Endothelial cell of umbilical vein (primary cell): ENCODE measurements at regions of chr9 and their contacts with region 1.

Region 1: GRCh38 chr9:109910671-109911518 is 130.9 kb downstream of the PALM2AKAP2 start:
- DNase-seq: peak; percentile 88
- H3K4me3 ChIP-seq: peak overlapping the region in 1 of 3 experiments; percentile 7
- H3K27ac ChIP-seq: peak overlapping the region; percentile 100
- H3K4me1 ChIP-seq: peaks cover 73% of the 10 kb centered on the region
- H3K27me3 ChIP-seq: no peaks in the 10 kb centered on the region
- CTCF ChIP-seq: no peak
- POLR2A ChIP-seq: no peak

Region 2: GRCh38 chr9:109627041-109627440 is 283.9 kb before region 1 on chr9:
- CTCF ChIA-PET with region 1: no interaction called
- POLR2A ChIA-PET with region 1: no interaction called
- dilution Hi-C with region 1: no loop called
- intact Hi-C with region 1: no loop called
- DNase-seq: no peak
- H3K4me3 ChIP-seq: no peak overlapping the region
- H3K27ac ChIP-seq: no peak overlapping the region
- H3K4me1 ChIP-seq: no peaks in the 10 kb centered on the region
- H3K27me3 ChIP-seq: no peaks in the 10 kb centered on the region
- CTCF ChIP-seq: no peak
- POLR2A ChIP-seq: no peak

Region 3: DNA sequence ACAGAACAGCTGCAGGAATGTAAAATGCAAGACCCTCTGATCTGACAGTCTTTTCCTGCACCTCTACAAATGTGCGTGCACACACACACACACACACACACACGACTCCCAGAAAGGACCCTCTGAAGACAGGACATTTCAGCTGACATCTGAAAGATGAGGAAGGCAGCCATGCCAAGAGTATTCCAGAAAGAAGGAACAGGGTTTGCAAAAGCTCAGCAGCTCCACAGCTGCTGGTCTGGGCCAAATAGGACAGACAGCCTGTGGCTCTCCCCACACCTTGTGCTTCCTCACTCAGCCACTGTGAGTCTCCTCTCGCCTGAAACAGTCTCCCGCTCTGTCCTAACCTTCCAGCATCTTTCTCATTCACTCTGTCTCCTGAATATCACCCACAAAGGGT is 58.1 kb after region 1 on chr9:
- CTCF ChIA-PET with region 1: interaction called, 8 read pairs
- POLR2A ChIA-PET with region 1: no interaction called
- dilution Hi-C with region 1: no loop called
- intact Hi-C with region 1: loop called (anchors 1 kb)
- DNase-seq: peak; percentile 72
- H3K4me3 ChIP-seq: no peak overlapping the region
- H3K27ac ChIP-seq: peak overlapping the region; percentile 91
- H3K4me1 ChIP-seq: peaks cover 27% of the 10 kb centered on the region
- H3K27me3 ChIP-seq: no peaks in the 10 kb centered on the region
- CTCF ChIP-seq: peak; percentile 16 to 31
- POLR2A ChIP-seq: no peak

Region 4: DNA sequence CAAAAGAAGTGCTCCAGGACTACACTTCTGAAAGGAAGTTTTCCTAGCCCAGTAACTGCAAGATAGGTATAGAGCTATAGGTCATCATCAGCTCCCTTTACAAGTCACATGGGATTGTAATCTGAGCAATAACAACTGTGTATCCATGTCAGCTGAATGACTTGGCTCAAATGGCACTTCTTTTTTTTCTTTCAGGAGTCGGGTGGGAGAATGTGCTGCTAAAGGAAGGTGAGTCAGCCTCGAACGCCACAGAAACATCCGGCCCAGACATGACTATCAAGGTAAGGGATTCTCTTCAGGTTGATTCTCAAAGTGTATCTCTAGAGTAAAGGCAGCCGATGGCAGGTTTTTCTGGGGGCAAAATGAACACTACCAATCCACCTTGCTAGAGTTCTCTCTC is 104.9 kb after region 1 on chr9:
- CTCF ChIA-PET with region 1: interaction called, 16 read pairs
- POLR2A ChIA-PET with region 1: interaction called, 4 read pairs
- dilution Hi-C with region 1: no loop called
- intact Hi-C with region 1: loop called (anchors 1 kb)
- DNase-seq: peak; percentile 95
- H3K4me3 ChIP-seq: no peak overlapping the region
- H3K27ac ChIP-seq: peak overlapping the region; percentile 100
- H3K4me1 ChIP-seq: peaks cover 28% of the 10 kb centered on the region
- H3K27me3 ChIP-seq: no peaks in the 10 kb centered on the region
- CTCF ChIP-seq: no peak
- POLR2A ChIP-seq: no peak

Region 5: DNA sequence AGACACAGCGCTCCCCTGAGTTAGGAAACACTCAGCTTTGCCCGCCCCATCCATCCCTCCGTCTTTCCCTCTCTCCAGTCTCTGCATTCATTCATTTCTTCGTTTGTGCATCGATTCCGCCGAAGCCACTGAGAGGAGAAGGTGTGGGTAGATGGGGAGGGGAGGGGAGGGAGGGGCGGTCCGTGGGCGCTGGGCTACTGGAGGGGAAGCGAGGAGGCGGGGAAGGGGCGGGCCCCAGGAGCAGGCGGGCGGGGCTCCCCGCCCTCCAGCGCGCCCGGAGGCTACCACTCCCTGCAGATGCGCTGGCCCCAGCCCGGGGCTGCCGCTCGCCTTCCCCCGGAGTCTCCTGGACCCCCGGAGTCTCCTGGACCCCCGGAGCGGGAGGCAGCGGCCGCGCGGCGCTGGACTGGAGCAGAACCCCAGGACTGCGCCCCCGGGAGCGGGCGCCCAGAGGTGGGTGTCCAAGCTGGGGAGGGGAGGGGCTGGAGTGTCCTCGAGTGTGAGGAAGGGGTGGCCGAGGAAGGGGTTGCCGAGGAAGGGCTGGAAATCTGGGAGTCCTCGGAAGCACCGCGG is 137.6 kb after region 1 on chr9:
- CTCF ChIA-PET with region 1: interaction called, 27 read pairs
- POLR2A ChIA-PET with region 1: interaction called, 7 read pairs
- dilution Hi-C with region 1: no loop called
- intact Hi-C with region 1: loop called (anchors 1 kb)
- DNase-seq: peak; percentile 88
- H3K4me3 ChIP-seq: peak overlapping the region; percentile 99 to 100 (median 100)
- H3K27ac ChIP-seq: peak overlapping the region; percentile 98
- H3K4me1 ChIP-seq: peaks cover 28% of the 10 kb centered on the region
- H3K27me3 ChIP-seq: no peaks in the 10 kb centered on the region
- CTCF ChIP-seq: no peak
- POLR2A ChIP-seq: peak; percentile 96

Region 6: GRCh38 chr9:110069326-110070248 is 158.7 kb after region 1 on chr9:
- CTCF ChIA-PET with region 1: interaction called, 12 read pairs
- POLR2A ChIA-PET with region 1: interaction called, 4 read pairs
- dilution Hi-C with region 1: loop called (anchors 10 kb)
- intact Hi-C with region 1: loop called (anchors 1 kb)
- DNase-seq: peak; percentile 93
- H3K4me3 ChIP-seq: no peak overlapping the region
- H3K27ac ChIP-seq: peak overlapping the region; percentile 91
- H3K4me1 ChIP-seq: peaks cover 70% of the 10 kb centered on the region
- H3K27me3 ChIP-seq: no peaks in the 10 kb centered on the region
- CTCF ChIP-seq: no peak
- POLR2A ChIP-seq: no peak